Posterior cingulate gyrus (tissue), 11 donors: ENCODE measurements at regions of chr10 and their contacts with region 1.

Region 1: DNA sequence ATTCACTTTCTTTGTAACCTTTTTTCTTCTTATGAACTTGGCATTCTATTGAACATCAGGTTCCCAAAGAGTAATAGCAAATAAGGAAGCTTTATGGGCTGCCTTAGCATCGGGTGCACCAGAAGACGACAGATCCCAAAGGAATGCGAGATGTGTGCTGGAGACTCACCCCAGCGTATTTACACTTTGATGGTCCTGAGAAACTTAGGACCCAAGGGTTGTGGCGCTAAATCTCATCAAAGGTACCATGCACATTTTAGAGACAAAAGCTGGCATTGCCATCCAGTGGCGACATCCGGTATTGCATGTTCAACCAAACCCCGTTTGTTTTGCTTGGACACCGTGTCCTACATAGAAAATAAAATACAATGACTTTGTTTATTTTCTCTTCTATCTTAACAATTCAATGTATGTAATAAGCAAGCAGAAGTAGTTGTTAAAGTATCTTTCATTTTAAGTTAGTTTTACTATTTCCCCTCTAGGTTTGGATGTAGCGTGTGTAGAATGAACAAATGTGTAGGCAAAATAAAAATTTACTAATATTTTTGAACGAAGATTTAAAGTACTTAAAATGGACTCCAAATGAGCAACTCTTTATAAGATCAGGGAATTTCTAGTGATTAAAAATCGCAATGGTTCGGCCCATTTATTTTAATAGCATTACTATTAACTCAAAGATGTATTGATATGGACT is 1154.8 kb downstream of the GATA3 start:
- DNase-seq: peak; percentile 36 to 90 (median 76)

Region 2: GRCh38 chr10:7872041-7872442 is 1337.2 kb before region 1 on chr10:
- intact Hi-C with region 1: loop called (anchors 2 kb)
- DNase-seq: no peak